MCF 10A (cell line): ENCODE measurements at regions of chr10 and their contacts with region 1.

Region 1: DNA sequence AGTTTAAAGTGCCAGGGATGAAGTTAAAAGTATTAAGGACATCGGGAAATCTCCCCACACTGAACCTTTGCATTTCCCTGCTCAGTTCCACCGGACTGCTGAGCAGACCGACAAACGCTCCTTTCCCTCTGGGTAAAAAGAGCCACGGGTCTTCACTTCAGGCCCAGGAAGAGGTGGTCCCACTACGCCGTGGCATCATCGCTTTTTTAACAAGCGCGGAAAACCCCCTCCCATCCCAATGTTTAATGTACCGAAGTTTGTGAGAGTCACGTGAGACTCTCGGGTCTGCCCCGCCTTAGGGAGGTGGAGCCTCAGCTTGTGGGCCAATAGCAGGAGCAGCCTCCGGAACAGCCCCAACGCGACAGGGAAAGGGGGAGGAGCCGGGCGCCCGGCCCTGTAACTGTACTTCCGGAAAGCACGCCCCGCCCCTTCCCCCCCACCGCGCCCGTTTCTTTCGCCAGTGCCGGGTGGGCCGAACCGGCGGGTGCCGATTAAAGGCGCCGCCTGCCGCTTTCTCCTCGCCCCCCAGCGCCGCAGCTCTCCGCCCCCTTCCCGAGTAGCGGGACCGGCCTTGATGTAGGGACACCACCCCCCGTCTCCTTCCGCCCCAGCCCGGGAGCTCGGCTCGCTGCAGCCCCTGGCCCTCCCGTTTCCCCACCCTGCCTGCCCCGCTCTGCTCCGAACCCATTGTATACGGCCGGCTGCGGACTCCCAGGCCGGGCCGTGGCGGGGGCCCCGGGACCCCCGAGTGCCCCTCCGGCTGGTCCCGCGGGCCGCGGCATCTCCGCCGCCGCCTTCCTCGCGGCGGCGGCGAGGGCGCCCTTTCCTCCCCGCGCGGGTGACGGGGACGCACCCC is 2.2 kb upstream of the TRIM8 start:
- DNase-seq: peak; percentile 95
- H3K4me3 Mint-ChIP-seq: peak overlapping the region; percentile 90
- H3K27ac Mint-ChIP-seq: peak overlapping the region; percentile 85
- H3K4me1 Mint-ChIP-seq: peaks cover 21% of the 10 kb centered on the region
- H3K27me3 Mint-ChIP-seq: no peaks in the 10 kb centered on the region
- CTCF ChIP-seq: no peak

Region 2: GRCh38 chr10:102055647-102056419 is 586.3 kb before region 1 on chr10 and contains the start of gene ARMH3:
- CTCF ChIA-PET with region 1: no interaction called
- POLR2A ChIA-PET with region 1: no interaction called
- intact Hi-C with region 1: no loop called
- DNase-seq: peak; percentile 98
- H3K4me3 Mint-ChIP-seq: peak within 1 kb of the TSS; percentile 92
- H3K27ac Mint-ChIP-seq: peak within 1 kb of the TSS; percentile 89
- H3K4me1 Mint-ChIP-seq: peaks cover 24% of the 10 kb centered on the region
- H3K27me3 Mint-ChIP-seq: no peaks in the 10 kb centered on the region
- CTCF ChIP-seq: no peak
- total RNA-seq, gene ARMH3: 17.6 and 18.9 TPM in 2 replicates

Region 3: DNA sequence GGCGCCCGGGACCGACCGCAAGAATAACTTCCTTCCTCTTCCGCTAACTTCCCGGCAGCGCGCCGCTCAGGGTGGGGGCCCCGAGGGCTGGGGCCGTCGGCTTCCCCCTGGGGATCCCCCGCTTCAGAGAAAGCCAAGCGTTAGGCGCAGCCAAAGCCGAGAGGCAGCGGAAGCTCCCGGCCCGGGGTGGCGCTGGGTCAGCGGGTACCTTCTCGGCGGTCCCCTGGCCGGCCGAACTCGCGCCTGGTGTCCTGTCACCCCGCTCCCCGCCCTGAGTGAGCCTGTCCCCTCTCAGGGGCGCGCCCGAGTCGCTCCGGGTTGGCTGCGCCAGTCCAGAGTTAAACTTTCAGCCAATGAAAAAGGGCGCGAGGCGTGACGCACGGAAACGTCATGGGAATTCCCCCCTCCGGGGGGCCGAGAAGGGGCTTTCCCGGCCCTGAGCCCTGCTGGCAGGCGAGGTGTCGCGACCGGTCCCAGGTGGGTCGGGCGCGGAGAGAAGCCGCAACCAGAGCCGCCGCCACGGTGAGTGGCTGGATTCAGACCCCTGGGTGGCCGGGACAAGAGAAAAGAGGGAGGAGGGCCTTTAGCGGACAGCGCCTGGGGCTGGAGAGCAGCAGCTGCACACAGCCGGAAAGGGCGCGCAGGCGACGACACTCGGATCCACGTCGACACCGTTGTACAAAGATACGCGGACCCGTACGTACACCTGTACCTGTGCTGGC is 247.9 kb before region 1 on chr10:
- CTCF ChIA-PET with region 1: no interaction called
- POLR2A ChIA-PET with region 1: interaction called, 11 read pairs
- intact Hi-C with region 1: no loop called
- DNase-seq: peak; percentile 96
- H3K4me3 Mint-ChIP-seq: peak overlapping the region; percentile 92
- H3K27ac Mint-ChIP-seq: peak overlapping the region; percentile 99
- H3K4me1 Mint-ChIP-seq: peaks cover 7% of the 10 kb centered on the region
- H3K27me3 Mint-ChIP-seq: no peaks in the 10 kb centered on the region
- CTCF ChIP-seq: no peak

Region 4: DNA sequence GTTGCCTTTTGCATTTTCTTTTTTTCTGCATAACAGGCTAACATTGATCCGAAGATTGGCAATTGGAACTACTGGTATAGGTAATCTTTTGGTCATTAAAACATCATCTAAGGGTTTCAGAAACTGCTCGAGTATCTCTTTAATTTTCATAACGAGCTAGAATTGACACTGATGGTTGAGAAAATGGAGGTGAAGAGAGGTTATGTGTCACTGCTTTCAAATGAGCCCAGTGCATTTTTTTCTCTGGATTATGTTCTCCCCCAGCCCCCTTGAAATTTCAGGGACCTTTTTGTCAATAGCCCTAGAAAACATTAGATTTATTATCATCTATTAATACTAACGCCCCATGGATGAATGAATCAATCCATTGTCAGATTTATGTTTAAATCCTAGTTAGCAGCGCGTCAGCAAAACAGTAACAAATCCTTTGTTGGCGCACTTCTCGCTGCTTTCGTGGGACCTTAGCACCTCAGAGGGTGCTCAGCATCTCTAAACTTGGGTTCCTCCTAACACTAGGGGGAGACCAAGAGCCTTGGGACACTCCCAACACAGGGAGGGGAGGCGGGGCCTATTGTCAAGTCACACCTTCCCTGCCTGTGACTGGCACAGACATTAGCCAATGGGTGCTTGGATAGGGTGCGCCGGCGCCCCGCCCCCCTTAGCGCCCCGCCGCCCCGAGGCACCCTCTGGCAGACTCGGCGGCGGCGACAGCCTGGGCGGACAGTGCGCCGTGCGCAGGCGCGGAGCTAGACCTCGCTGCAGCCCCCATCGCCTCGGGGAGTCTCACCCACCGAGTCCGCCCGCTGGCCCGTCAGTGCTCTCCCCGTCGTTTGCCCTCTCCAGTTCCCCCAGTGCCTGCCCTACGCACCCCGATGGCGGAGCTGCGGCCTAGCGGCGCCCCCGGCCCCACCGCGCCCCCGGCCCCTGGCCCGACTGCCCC is 138.6 kb before region 1 on chr10 and contains the start of gene SUFU:
- CTCF ChIA-PET with region 1: no interaction called
- POLR2A ChIA-PET with region 1: interaction called, 51 read pairs
- intact Hi-C with region 1: loop called (anchors 1 kb)
- DNase-seq: peak; percentile 100
- H3K4me3 Mint-ChIP-seq: no peak within 1 kb of the TSS
- H3K27ac Mint-ChIP-seq: peak within 1 kb of the TSS; percentile 65
- H3K4me1 Mint-ChIP-seq: peaks cover 16% of the 10 kb centered on the region
- H3K27me3 Mint-ChIP-seq: no peaks in the 10 kb centered on the region
- CTCF ChIP-seq: peak; percentile 75
- total RNA-seq, gene SUFU: 6.3 TPM in 2 replicates

Region 5: GRCh38 chr10:102629661-102630614 is 12.2 kb before region 1 on chr10:
- CTCF ChIA-PET with region 1: interaction called, 3 read pairs
- POLR2A ChIA-PET with region 1: interaction called, 29 read pairs
- intact Hi-C with region 1: no loop called
- DNase-seq: peak; percentile 57
- H3K4me3 Mint-ChIP-seq: peak overlapping the region; percentile 6
- H3K27ac Mint-ChIP-seq: peak overlapping the region; percentile 53
- H3K4me1 Mint-ChIP-seq: peaks cover 47% of the 10 kb centered on the region
- H3K27me3 Mint-ChIP-seq: no peaks in the 10 kb centered on the region
- CTCF ChIP-seq: no peak

Region 6: DNA sequence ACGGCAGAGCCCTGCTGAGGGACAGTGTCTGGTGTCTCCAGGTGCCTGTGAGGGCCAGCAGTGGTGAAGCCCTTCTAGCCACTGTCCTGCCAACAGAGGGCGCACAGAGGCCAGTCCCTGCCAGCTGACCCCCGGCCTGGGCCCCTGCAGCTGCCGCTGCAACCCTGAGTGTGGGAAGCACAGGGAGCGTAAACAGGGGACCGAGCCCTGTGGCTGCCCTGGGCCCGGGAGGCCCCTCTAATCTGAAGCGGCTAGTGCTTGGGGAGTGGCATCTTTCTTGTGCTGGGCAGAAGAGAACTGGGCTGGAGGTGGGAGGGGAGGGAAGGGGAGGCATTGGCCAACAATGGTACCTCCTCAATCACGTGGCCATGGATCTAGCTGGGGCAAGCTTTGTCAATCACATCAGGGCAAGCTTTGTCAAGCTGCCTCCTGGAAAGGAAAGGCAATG is 36.8 kb after region 1 on chr10:
- CTCF ChIA-PET with region 1: no interaction called
- POLR2A ChIA-PET with region 1: interaction called, 13 read pairs
- intact Hi-C with region 1: no loop called
- DNase-seq: peak; percentile 63
- H3K4me3 Mint-ChIP-seq: no peak overlapping the region
- H3K27ac Mint-ChIP-seq: no peak overlapping the region
- H3K4me1 Mint-ChIP-seq: peaks cover 4% of the 10 kb centered on the region
- H3K27me3 Mint-ChIP-seq: no peaks in the 10 kb centered on the region
- CTCF ChIP-seq: peak; percentile 66

Region 7: DNA sequence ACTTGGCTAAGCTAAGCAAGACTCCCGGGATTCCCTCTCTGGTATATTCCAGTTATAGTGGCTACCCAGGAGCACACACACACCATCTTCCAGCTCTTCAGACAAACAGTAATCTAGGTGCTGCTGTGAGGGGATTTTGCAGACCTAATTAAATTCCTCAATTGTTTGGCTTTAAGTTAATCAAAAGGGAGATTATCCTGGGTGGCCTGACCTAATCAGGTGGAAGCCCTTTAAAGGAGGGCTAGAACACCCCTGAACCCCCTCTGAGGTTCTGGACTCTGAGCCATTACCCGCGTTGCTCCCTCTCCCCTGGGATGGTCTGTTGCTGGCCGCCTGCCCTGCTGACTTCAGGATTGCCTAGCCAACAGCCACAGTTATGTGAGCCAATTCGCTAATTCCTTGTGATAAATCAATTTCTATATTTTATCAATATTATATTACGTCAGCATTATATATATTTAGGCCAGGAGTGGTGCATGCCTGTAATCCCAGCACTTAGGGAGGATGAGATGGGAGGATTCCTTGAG is 78.7 kb after region 1 on chr10:
- CTCF ChIA-PET with region 1: interaction called, 3 read pairs
- POLR2A ChIA-PET with region 1: interaction called, 10 read pairs
- intact Hi-C with region 1: no loop called
- DNase-seq: no peak
- H3K4me3 Mint-ChIP-seq: no peak overlapping the region
- H3K27ac Mint-ChIP-seq: peak overlapping the region; percentile 80
- H3K4me1 Mint-ChIP-seq: peaks cover 28% of the 10 kb centered on the region
- H3K27me3 Mint-ChIP-seq: no peaks in the 10 kb centered on the region
- CTCF ChIP-seq: no peak